ENCODE measurements at regions of chr1 and their contacts with region 1.

Region 1: GRCh38 chr1:155540000-155540874 is 22.4 kb downstream of the ASH1L start:
- DNase-seq: no peak
- H3K4me3 ChIP-seq: no peak overlapping the region
- H3K27ac ChIP-seq: no peak overlapping the region
- H3K4me1 ChIP-seq: no peaks in the 10 kb centered on the region
- H3K27me3 ChIP-seq: no peaks in the 10 kb centered on the region
- CTCF ChIP-seq: no peak

Region 2: GRCh38 chr1:155513300-155513916 is 26.8 kb before region 1 on chr1:
- CTCF ChIA-PET with region 1: no interaction called
- POLR2A ChIA-PET with region 1: interaction called, 11 read pairs
- intact Hi-C with region 1: no loop called
- DNase-seq: no peak
- H3K4me3 ChIP-seq: no peak overlapping the region
- H3K27ac ChIP-seq: no peak overlapping the region
- H3K4me1 ChIP-seq: no peaks in the 10 kb centered on the region
- H3K27me3 ChIP-seq: no peaks in the 10 kb centered on the region
- CTCF ChIP-seq: no peak